Mucosa of descending colon (tissue), 3 donors: ENCODE measurements at regions of chr2 and their contacts with region 1.

Region 1: DNA sequence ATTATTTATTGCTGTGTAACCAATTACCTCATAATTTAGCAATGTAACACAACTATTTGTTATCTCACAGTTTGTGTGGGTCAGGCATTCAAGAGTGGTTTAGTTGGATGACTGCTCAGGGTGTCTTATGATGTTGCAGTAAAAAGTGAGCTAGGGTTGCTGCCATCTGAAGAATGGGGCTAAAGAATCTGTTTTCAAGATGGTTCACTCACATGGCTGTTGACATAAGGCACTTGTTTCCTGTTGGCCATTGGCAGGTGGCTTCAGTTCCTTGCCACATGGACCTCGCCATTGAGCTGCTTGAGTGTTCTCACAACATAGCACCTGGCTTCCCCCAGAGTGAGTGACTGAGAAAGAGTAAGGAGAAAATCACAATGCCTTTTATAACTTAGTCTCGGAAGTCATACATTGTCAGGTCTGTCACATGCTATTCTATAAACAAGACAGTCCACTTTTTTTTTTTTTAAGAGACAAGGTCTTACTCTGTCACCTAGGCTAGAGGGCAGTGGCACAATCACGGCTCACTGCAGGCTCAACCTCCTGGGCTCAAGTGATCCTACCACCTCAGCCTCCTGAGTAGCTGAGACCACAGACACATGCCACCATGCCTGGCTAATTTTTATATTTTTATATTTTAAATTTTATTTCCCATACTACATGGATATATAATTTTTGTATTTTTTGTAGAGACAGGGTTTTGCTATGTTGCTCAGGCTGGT is 123.1 kb downstream of the TMEM17 start:
- DNase-seq: no peak
- ATAC-seq: no peak
- H3K4me3 ChIP-seq: no peak overlapping the region
- H3K4me1 ChIP-seq: no peaks in the 10 kb centered on the region
- CTCF ChIP-seq: no peak

Region 2: DNA sequence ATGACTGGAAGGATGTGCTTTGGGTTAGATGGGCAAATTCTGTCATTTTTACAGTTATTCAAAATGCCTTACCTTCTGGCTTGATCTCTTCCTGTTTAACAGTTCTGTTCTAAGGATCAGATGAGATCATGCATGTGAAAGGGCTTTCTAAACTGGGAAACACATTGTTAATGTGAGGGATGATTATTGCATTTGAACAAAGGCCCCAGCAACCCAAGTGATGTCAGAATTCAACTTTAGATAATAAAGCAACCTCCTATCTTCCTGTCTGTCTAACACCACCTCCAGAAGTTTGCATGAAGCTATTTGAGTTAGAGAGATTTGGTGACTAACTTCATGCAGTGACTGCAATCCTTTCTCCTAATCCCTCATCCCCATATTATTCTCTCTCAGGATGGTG is 264.8 kb before region 1 on chr2:
- intact Hi-C with region 1: loop called in 1 of 2 experiments (anchors 10 kb)
- DNase-seq: no peak
- ATAC-seq: no peak
- H3K4me3 ChIP-seq: no peak overlapping the region
- H3K4me1 ChIP-seq: no peaks in the 10 kb centered on the region
- CTCF ChIP-seq: no peak